ENCODE measurements at regions of chr2 and their contacts with region 1.

Region 1: GRCh38 chr2:63841254-63842022 is at the start of gene UGP2:
- DNase-seq: peak; percentile 90
- ATAC-seq: peak; percentile 84
- H3K4me3 ChIP-seq: peak within 1 kb of the TSS; percentile 82 to 95 (median 85)
- H3K27ac ChIP-seq: peak within 1 kb of the TSS; percentile 94
- H3K4me1 ChIP-seq: peaks cover 42% of the 10 kb centered on the region
- H3K27me3 ChIP-seq: no peaks in the 10 kb centered on the region; a peak in 1 of 5 replicates
- CTCF ChIP-seq: peak; percentile 68
- EP300 ChIP-seq: no peak; a peak in 2 of 4 replicates
- POLR2A ChIP-seq: peak; percentile 78 to 90
- RAD21 ChIP-seq: peak; percentile 50
- total RNA-seq, gene UGP2: 134 and 210 TPM in 2 replicates

Region 2: GRCh38 chr2:62313449-62314227 is 1527.8 kb before region 1 on chr2:
- CTCF ChIA-PET with region 1: no interaction called
- POLR2A ChIA-PET with region 1: no interaction called
- in situ Hi-C with region 1: no loop called
- intact Hi-C with region 1: no loop called
- DNase-seq: no peak
- ATAC-seq: no peak
- H3K4me3 ChIP-seq: no peak overlapping the region
- H3K27ac ChIP-seq: no peak overlapping the region
- H3K4me1 ChIP-seq: no peaks in the 10 kb centered on the region
- H3K27me3 ChIP-seq: peaks cover 0 to 2% of the 10 kb centered on the region in 2 experiments; a peak in 2 of 5 replicates
- CTCF ChIP-seq: no peak
- EP300 ChIP-seq: no peak
- POLR2A ChIP-seq: no peak
- RAD21 ChIP-seq: no peak

Region 3: GRCh38 chr2:63698825-63699548 is 142.5 kb before region 1 on chr2:
- CTCF ChIA-PET with region 1: no interaction called
- POLR2A ChIA-PET with region 1: interaction called, 34 read pairs
- in situ Hi-C with region 1: no loop called
- intact Hi-C with region 1: loop called (anchors 1 kb)
- DNase-seq: peak; percentile 72
- ATAC-seq: peak; percentile 100
- H3K4me3 ChIP-seq: no peak overlapping the region
- H3K27ac ChIP-seq: no peak overlapping the region
- H3K4me1 ChIP-seq: peaks cover 21% of the 10 kb centered on the region
- H3K27me3 ChIP-seq: no peaks in the 10 kb centered on the region
- CTCF ChIP-seq: peak; percentile 91
- EP300 ChIP-seq: no peak
- POLR2A ChIP-seq: no peak
- RAD21 ChIP-seq: peak; percentile 87

Region 4: GRCh38 chr2:63819765-63820717 is 21.4 kb before region 1 on chr2:
- CTCF ChIA-PET with region 1: no interaction called
- POLR2A ChIA-PET with region 1: interaction called, 56 read pairs
- in situ Hi-C with region 1: no loop called
- intact Hi-C with region 1: loop called (anchors 2 kb)
- DNase-seq: peak; percentile 92
- ATAC-seq: peak; percentile 99
- H3K4me3 ChIP-seq: peak overlapping the region in 1 of 3 experiments; percentile 10; a peak in 1 of 6 replicates
- H3K27ac ChIP-seq: peak overlapping the region; percentile 66
- H3K4me1 ChIP-seq: peaks cover 44% of the 10 kb centered on the region
- H3K27me3 ChIP-seq: no peaks in the 10 kb centered on the region
- CTCF ChIP-seq: 0 out of 2 replicates have a peak, but pooled peaks have one; percentile 11
- EP300 ChIP-seq: peak in 1 of 2 experiments; percentile 95; a peak in 2 of 4 replicates
- POLR2A ChIP-seq: no peak
- RAD21 ChIP-seq: 0 out of 2 replicates have a peak, but pooled peaks have one; percentile 8

Region 5: GRCh38 chr2:63856303-63856603 is 14.8 kb after region 1 on chr2:
- CTCF ChIA-PET with region 1: no interaction called
- POLR2A ChIA-PET with region 1: interaction called, 47 read pairs
- in situ Hi-C with region 1: no loop called
- intact Hi-C with region 1: loop called (anchors 1 kb)
- DNase-seq: no peak
- ATAC-seq: no peak
- H3K4me3 ChIP-seq: no peak overlapping the region
- H3K27ac ChIP-seq: no peak overlapping the region
- H3K4me1 ChIP-seq: peaks cover 33% of the 10 kb centered on the region
- H3K27me3 ChIP-seq: no peaks in the 10 kb centered on the region
- CTCF ChIP-seq: no peak
- EP300 ChIP-seq: no peak
- POLR2A ChIP-seq: no peak
- RAD21 ChIP-seq: no peak

Measured in HepG2 (cell line).